ENCODE measurements at regions of chr4 and their contacts with region 1.

Region 1: DNA sequence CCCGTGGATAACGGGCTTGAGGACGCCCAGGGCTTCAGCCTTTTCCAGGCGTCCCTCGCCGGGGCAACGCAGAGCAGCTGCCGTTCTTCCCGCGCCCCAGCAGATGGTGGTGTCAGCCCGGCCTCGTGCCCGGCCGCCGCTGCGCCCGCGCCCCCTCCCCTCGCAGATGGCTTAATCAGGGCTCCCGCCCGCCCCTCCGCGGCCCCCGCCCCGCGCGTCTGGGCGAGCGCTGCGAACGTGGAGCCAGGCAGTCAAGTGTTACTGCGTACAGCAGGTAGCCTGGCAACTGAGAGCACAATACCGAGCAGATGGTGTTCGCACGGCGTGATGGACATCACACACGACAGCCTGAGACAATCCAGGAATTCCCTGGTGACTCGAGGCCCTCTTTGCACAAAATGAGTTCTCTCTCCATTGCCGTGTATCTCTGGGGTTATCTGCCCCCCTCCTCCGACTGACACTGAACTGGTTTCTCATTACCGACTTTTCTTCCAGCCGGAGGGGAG is 69.3 kb downstream of the MGST2 start:
- DNase-seq: peak; percentile 88
- H3K4me3 ChIP-seq: peak overlapping the region; percentile 31 to 39
- H3K27ac ChIP-seq: peak overlapping the region; percentile 75 to 80
- H3K4me1 ChIP-seq: peaks cover 2% of the 10 kb centered on the region
- H3K27me3 ChIP-seq: no peaks in the 10 kb centered on the region
- CTCF ChIP-seq: peak; percentile 75 to 95 (median 84)
- POLR2A ChIP-seq: no peak

Region 2: GRCh38 chr4:139665690-139666529 is 69.0 kb before region 1 on chr4 and contains the start of gene MGST2:
- intact Hi-C with region 1: loop called (anchors 5 kb)
- DNase-seq: peak; percentile 83
- H3K4me3 ChIP-seq: peak within 1 kb of the TSS; percentile 47 to 53
- H3K27ac ChIP-seq: peak within 1 kb of the TSS; percentile 87 to 91
- H3K4me1 ChIP-seq: peaks cover 7% of the 10 kb centered on the region
- H3K27me3 ChIP-seq: no peaks in the 10 kb centered on the region
- CTCF ChIP-seq: no peak
- POLR2A ChIP-seq: peak; percentile 24
- total RNA-seq, gene MGST2: 101 to 135 TPM

Region 3: GRCh38 chr4:139901531-139902320 is 166.8 kb after region 1 on chr4:
- intact Hi-C with region 1: loop called (anchors 5 kb)
- DNase-seq: peak; percentile 23
- H3K4me3 ChIP-seq: peak overlapping the region; percentile 8 to 26
- H3K27ac ChIP-seq: peak overlapping the region; percentile 60 to 79
- H3K4me1 ChIP-seq: no peaks in the 10 kb centered on the region
- H3K27me3 ChIP-seq: no peaks in the 10 kb centered on the region
- CTCF ChIP-seq: no peak
- POLR2A ChIP-seq: no peak

Region 4: DNA sequence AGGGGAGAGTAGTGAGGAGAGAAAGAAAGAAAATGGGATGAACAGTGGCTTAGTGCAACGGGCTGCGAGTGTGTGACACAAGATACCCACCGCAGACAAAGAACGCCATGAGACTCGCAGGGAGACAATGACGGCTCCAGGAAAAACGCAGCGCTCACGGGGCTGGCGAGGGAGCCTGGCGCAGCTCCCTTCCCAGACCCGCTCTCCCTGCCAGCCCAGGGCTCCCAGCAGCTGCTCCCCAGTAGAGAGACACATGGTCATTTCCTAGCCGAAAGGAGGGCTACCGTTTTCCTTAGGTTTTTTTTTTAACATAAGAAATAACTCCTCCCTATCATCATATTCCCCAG is 269.6 kb after region 1 on chr4:
- intact Hi-C with region 1: loop called (anchors 10 kb)
- DNase-seq: peak; percentile 65
- H3K4me3 ChIP-seq: peak overlapping the region; percentile 21 to 26
- H3K27ac ChIP-seq: peak overlapping the region; percentile 58 to 66
- H3K4me1 ChIP-seq: no peaks in the 10 kb centered on the region
- H3K27me3 ChIP-seq: no peaks in the 10 kb centered on the region
- CTCF ChIP-seq: no peak
- POLR2A ChIP-seq: no peak

Region 5: DNA sequence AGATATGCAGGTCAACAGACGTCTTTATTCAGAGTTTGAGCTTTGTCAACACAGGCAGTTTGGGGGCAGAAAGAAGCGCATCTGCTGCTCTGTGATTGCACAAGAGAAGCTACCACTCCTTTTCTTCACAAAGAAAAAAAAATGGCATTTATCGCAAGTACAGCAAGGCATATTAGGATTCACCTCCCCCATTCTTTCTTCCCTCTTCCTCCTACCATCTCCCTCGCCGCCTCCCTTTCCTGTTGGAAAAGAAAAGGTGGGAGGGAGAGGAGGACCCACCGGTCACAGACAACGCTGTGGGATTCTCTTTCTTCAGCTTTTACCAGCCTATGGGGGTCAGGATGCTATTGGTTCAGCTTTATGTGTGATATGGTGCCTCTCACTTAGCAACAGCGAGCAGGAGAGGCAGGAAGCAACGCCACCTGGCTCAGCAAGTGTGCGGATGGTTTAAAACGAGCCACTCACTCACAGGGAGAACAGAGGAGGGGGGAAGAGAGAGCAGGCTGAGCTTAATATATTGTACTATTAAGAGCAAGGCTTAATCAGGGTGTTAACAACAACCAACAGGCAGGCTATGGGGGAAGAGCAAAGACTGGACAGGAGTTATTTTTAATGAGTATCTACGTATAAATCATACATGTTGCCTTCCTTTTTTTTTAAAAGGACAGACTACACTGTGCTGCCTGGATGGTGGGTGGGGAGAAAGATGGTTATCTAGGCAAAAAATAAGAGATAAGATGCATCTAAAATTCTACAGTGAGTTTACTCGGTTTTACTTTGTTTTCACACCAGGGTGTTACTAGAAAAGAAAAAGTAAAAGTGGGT is 314.3 kb after region 1 on chr4:
- intact Hi-C with region 1: loop called (anchors 2 kb)
- DNase-seq: peak; percentile 71
- H3K4me3 ChIP-seq: peak overlapping the region; percentile 22 to 24
- H3K27ac ChIP-seq: peak overlapping the region; percentile 69 to 78
- H3K4me1 ChIP-seq: no peaks in the 10 kb centered on the region
- H3K27me3 ChIP-seq: no peaks in the 10 kb centered on the region
- CTCF ChIP-seq: peak in 3 of 4 experiments; percentile 37 to 50 (median 37)
- POLR2A ChIP-seq: no peak

Region 6: DNA sequence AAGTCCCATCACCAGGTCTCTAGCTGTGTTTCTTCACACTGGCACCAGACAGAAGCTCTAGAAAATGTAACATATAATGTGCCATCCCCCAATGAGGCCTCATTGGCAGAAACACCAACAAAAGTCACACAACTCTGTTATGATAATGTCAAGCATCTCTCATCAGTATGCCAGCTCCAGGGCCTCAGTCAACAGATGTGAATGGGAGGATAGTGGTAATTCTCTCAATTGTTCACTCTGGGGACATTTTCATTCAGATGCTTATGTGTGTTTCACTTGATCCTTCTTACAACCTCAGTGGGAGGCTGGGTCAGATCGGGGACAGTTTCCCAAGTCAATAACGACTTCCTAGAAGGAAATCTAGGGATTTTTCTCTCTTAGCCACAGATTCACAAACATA is 581.0 kb after region 1 on chr4:
- intact Hi-C with region 1: no loop called
- DNase-seq: no peak
- H3K4me3 ChIP-seq: no peak overlapping the region
- H3K27ac ChIP-seq: no peak overlapping the region
- H3K4me1 ChIP-seq: no peaks in the 10 kb centered on the region
- H3K27me3 ChIP-seq: no peaks in the 10 kb centered on the region
- CTCF ChIP-seq: no peak
- POLR2A ChIP-seq: no peak

Region 7: GRCh38 chr4:140326395-140326993 is 591.6 kb after region 1 on chr4:
- intact Hi-C with region 1: loop called (anchors 5 kb)
- DNase-seq: no peak
- H3K4me3 ChIP-seq: no peak overlapping the region
- H3K27ac ChIP-seq: no peak overlapping the region
- H3K4me1 ChIP-seq: no peaks in the 10 kb centered on the region
- H3K27me3 ChIP-seq: no peaks in the 10 kb centered on the region
- CTCF ChIP-seq: peak; percentile 24 to 78 (median 60)
- POLR2A ChIP-seq: no peak